ENCODE measurements at regions of chr12 and their contacts with region 1.

Region 1: GRCh38 chr12:13211859-13212664 is 15.5 kb downstream of the EMP1 start:
- DNase-seq: no peak
- H3K4me3 ChIP-seq: no peak overlapping the region
- CTCF ChIP-seq: no peak
- POLR2A ChIP-seq: no peak

Region 2: GRCh38 chr12:12791756-12792369 is 420.2 kb before region 1 on chr12:
- intact Hi-C with region 1: loop called (anchors 10 kb)
- DNase-seq: peak in 1 of 2 donors; percentile 78
- H3K4me3 ChIP-seq: no peak overlapping the region
- CTCF ChIP-seq: no peak
- POLR2A ChIP-seq: no peak

Region 3: DNA sequence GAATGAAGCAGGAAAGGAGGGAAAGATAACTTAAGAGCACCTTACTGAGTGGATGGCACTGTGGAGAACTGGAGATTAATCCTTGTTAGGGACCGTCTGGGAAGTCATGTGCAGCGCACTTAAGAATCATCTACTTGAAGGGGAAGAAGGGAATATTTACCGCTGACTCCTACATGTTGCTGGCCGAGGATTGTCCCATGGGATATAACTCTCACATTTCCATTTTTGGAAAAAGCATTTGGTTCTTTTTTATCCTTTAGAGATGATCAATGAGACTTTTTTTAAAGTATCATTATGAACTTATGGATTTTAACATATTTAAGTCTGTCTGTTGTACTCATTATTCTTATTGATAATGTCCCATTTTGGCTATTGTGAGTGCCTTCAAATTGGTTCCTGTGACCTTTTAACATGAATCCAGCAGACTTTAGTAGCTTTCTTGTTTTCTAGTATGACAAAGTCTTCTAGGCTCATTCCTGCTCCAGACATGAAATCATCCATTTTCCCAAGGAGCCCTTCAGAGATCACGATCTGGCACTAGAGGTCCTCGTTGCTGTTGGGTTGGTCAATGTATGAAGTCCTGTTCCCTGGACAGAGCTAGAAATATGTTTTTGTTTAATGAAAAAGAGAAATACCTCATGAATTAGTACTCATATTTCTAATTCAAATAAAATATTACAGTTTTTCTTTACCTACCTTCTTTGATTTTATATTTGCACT is 188.1 kb before region 1 on chr12:
- intact Hi-C with region 1: loop called (anchors 10 kb)
- DNase-seq: peak in 1 of 2 donors; percentile 44
- H3K4me3 ChIP-seq: no peak overlapping the region
- CTCF ChIP-seq: no peak
- POLR2A ChIP-seq: no peak